ENCODE measurements at regions of chr3 and their contacts with region 1.

Region 1: GRCh38 chr3:354432-354831 is 157.9 kb downstream of the CHL1 start:
- DNase-seq: peak; percentile 60
- ATAC-seq: peak; percentile 87
- H3K4me3 ChIP-seq: no peak overlapping the region
- H3K27ac ChIP-seq: no peak overlapping the region
- H3K4me1 ChIP-seq: no peaks in the 10 kb centered on the region
- H3K27me3 ChIP-seq: no peaks in the 10 kb centered on the region
- CTCF ChIP-seq: peak; percentile 72 to 84 (median 76)
- EP300 ChIP-seq: no peak
- POLR2A ChIP-seq: no peak
- RAD21 ChIP-seq: peak; percentile 94

Region 2: DNA sequence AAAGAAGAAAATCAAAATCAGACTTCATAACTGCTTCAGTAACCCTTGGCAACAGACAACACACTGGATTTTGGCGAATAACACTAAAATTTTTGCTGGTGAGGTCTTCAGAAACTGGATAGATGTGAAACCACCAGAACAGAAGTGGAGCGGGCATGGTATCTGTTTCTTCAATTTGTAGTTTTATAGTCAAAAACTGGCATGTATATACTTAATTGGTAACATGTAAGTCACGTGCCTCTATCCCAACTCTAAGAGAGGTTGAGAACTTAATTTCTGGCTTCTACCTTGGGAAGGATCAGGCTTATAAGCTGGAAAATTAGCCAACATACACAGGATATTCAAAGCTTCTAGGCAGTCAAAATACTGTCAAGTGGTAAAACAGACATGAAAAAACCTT is 330.4 kb before region 1 on chr3:
- CTCF ChIA-PET with region 1: interaction called, 7 read pairs
- POLR2A ChIA-PET with region 1: no interaction called
- RAD21 ChIA-PET with region 1: interaction called, 8 read pairs
- SMC1A ChIA-PET with region 1: interaction called, 12 read pairs
- in situ Hi-C with region 1: no loop called
- intact Hi-C with region 1: no loop called
- DNase-seq: no peak
- ATAC-seq: no peak
- H3K4me3 ChIP-seq: no peak overlapping the region
- H3K27ac ChIP-seq: no peak overlapping the region
- H3K4me1 ChIP-seq: no peaks in the 10 kb centered on the region
- H3K27me3 ChIP-seq: no peaks in the 10 kb centered on the region
- CTCF ChIP-seq: no peak
- EP300 ChIP-seq: no peak
- POLR2A ChIP-seq: no peak
- RAD21 ChIP-seq: no peak

Region 3: DNA sequence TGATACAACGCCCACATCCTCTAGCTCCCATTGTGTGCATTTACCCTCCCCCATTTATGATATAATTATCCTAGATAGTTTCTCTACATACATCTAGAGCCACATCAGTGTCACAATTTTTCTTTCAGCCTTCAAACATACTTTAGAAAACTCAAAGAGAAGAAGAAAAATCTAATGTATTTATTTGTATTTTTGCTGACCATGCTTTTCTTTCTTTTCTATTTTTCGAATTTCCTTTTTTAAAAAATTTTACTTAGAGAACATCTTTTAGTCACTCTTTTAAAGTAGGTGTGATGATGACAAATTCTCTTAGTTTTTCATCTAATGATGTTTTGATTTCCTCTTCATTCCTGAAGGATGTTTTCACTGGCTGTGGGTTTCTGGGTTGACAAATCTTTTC is 274.9 kb before region 1 on chr3:
- CTCF ChIA-PET with region 1: interaction called, 7 read pairs
- POLR2A ChIA-PET with region 1: no interaction called
- RAD21 ChIA-PET with region 1: interaction called, 7 read pairs
- SMC1A ChIA-PET with region 1: interaction called, 14 read pairs
- in situ Hi-C with region 1: no loop called
- intact Hi-C with region 1: no loop called
- DNase-seq: no peak
- ATAC-seq: no peak
- H3K4me3 ChIP-seq: no peak overlapping the region
- H3K27ac ChIP-seq: no peak overlapping the region
- H3K4me1 ChIP-seq: no peaks in the 10 kb centered on the region
- H3K27me3 ChIP-seq: no peaks in the 10 kb centered on the region; a peak in 1 of 4 replicates
- CTCF ChIP-seq: no peak
- EP300 ChIP-seq: no peak
- POLR2A ChIP-seq: no peak
- RAD21 ChIP-seq: no peak

Region 4: DNA sequence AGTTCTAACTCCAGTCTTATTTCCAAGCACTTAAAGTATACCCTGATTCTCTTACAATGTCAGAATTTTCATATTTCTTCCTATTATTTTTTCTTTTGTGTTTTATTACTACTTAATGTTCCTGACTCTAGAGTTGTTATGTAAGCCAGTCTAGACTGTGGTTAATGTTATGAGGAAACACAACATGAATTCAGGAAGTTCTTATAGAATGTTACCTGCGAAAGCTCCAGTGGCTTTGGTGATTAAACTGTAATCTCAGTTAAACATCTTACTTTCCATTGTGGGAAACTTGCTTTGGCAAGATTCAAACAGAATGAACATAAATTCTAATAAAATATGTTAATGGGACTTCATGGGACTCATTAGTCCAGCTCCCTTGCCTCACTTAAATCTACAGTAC is 194.5 kb before region 1 on chr3:
- CTCF ChIA-PET with region 1: interaction called, 11 read pairs
- POLR2A ChIA-PET with region 1: no interaction called
- RAD21 ChIA-PET with region 1: interaction called, 7 read pairs
- SMC1A ChIA-PET with region 1: interaction called, 7 read pairs
- in situ Hi-C with region 1: no loop called
- intact Hi-C with region 1: no loop called
- DNase-seq: no peak
- ATAC-seq: no peak
- H3K4me3 ChIP-seq: no peak overlapping the region
- H3K27ac ChIP-seq: no peak overlapping the region
- H3K4me1 ChIP-seq: no peaks in the 10 kb centered on the region
- H3K27me3 ChIP-seq: peaks cover 0 to 3% of the 10 kb centered on the region in 2 experiments; a peak in 1 of 4 replicates
- CTCF ChIP-seq: no peak
- EP300 ChIP-seq: no peak
- POLR2A ChIP-seq: no peak
- RAD21 ChIP-seq: no peak

Region 5: GRCh38 chr3:243356-243725 is 111.1 kb before region 1 on chr3:
- CTCF ChIA-PET with region 1: interaction called, 4 read pairs
- POLR2A ChIA-PET with region 1: no interaction called
- RAD21 ChIA-PET with region 1: interaction called, 10 read pairs
- SMC1A ChIA-PET with region 1: interaction called, 30 read pairs
- in situ Hi-C with region 1: no loop called
- intact Hi-C with region 1: no loop called
- DNase-seq: no peak
- ATAC-seq: no peak; the same call in 2 of the 3 replicates
- H3K4me3 ChIP-seq: no peak overlapping the region
- H3K27ac ChIP-seq: no peak overlapping the region
- H3K4me1 ChIP-seq: no peaks in the 10 kb centered on the region
- H3K27me3 ChIP-seq: no peaks in the 10 kb centered on the region
- CTCF ChIP-seq: no peak
- EP300 ChIP-seq: no peak
- POLR2A ChIP-seq: no peak
- RAD21 ChIP-seq: no peak

Region 6: GRCh38 chr3:294096-294495 is 60.3 kb before region 1 on chr3:
- CTCF ChIA-PET with region 1: interaction called, 32 read pairs
- POLR2A ChIA-PET with region 1: interaction called, 6 read pairs
- RAD21 ChIA-PET with region 1: interaction called, 53 read pairs
- SMC1A ChIA-PET with region 1: interaction called, 64 read pairs
- in situ Hi-C with region 1: no loop called
- intact Hi-C with region 1: no loop called
- DNase-seq: no peak
- ATAC-seq: no peak
- H3K4me3 ChIP-seq: no peak overlapping the region
- H3K27ac ChIP-seq: no peak overlapping the region
- H3K4me1 ChIP-seq: peaks cover 10% of the 10 kb centered on the region
- H3K27me3 ChIP-seq: no peaks in the 10 kb centered on the region
- CTCF ChIP-seq: no peak
- EP300 ChIP-seq: no peak
- POLR2A ChIP-seq: no peak
- RAD21 ChIP-seq: no peak

Region 7: GRCh38 chr3:365268-365667 is 10.8 kb after region 1 on chr3:
- CTCF ChIA-PET with region 1: interaction called, 40 read pairs
- POLR2A ChIA-PET with region 1: interaction called, 4 read pairs
- RAD21 ChIA-PET with region 1: interaction called, 27 read pairs
- SMC1A ChIA-PET with region 1: interaction called, 40 read pairs
- in situ Hi-C with region 1: no loop called
- intact Hi-C with region 1: no loop called
- DNase-seq: no peak
- ATAC-seq: peak; percentile 90
- H3K4me3 ChIP-seq: no peak overlapping the region
- H3K27ac ChIP-seq: no peak overlapping the region
- H3K4me1 ChIP-seq: no peaks in the 10 kb centered on the region
- H3K27me3 ChIP-seq: no peaks in the 10 kb centered on the region
- CTCF ChIP-seq: no peak
- EP300 ChIP-seq: no peak
- POLR2A ChIP-seq: no peak
- RAD21 ChIP-seq: no peak

Region 8: DNA sequence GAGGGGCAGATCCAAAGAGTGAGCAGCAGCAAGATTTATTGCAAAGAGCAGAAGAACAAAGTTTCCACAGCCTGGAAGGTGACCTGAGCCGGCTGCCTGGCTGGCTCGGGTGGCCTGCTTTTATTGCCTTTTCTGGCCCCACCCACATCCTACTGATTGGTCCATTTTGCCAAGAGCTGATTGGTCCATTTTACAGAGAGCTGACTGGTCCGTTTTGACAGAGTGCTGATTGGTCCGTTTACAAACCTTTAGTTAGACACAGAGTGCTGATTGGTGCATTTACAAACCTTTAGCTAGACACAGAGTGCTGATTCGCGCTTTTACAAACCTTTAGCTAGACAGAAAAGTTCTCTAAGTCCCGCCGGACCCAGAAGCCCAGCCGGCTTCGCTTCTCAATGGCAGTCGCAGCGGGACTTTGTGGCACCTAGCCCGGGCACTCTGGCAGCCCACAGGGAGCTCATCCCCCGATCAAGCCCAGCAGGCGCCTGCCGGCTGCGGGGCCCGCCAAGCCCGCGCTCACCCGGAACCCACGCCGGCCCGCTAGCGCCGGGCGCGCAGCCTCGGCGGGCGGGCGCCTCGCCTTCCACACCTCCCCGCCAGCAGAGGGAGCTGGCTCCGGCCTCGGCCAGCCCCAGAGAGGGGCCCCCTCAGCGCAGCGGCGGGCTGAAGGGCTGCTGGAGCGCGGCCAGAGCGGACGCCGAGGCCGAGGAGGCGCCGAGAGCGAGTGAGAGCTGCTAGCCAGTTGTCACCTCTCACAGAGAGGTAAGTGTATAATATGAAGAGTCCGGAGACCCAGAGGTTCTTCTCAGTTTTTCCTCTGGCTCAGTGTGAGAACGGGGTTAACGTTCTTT is 181.4 kb after region 1 on chr3:
- CTCF ChIA-PET with region 1: no interaction called
- POLR2A ChIA-PET with region 1: no interaction called
- RAD21 ChIA-PET with region 1: no interaction called
- SMC1A ChIA-PET with region 1: no interaction called
- in situ Hi-C with region 1: no loop called
- intact Hi-C with region 1: no loop called
- DNase-seq: no peak
- ATAC-seq: no peak
- H3K4me3 ChIP-seq: no peak overlapping the region
- H3K27ac ChIP-seq: no peak overlapping the region
- H3K4me1 ChIP-seq: no peaks in the 10 kb centered on the region
- H3K27me3 ChIP-seq: no peaks in the 10 kb centered on the region
- CTCF ChIP-seq: no peak
- EP300 ChIP-seq: no peak
- POLR2A ChIP-seq: no peak
- RAD21 ChIP-seq: no peak

Measured in GM12878 (cell line).